A549 (cell line): ENCODE measurements at regions of chr5 and their contacts with region 1.

Region 1: GRCh38 chr5:151651997-151652645 is 34.6 kb downstream of the SPARC start:
- DNase-seq: peak; percentile 80 to 94
- ATAC-seq: peak; percentile 99 to 100
- H3K4me3 ChIP-seq: no peak overlapping the region
- H3K27ac ChIP-seq: peak overlapping the region in 1 of 2 experiments; percentile 9; a peak in 1 of 6 replicates
- H3K4me1 ChIP-seq: no peaks in the 10 kb centered on the region
- CTCF ChIP-seq: peak; percentile 86
- EP300 ChIP-seq: no peak
- POLR2A ChIP-seq: no peak
- RAD21 ChIP-seq: peak; percentile 91 to 94

Region 2: DNA sequence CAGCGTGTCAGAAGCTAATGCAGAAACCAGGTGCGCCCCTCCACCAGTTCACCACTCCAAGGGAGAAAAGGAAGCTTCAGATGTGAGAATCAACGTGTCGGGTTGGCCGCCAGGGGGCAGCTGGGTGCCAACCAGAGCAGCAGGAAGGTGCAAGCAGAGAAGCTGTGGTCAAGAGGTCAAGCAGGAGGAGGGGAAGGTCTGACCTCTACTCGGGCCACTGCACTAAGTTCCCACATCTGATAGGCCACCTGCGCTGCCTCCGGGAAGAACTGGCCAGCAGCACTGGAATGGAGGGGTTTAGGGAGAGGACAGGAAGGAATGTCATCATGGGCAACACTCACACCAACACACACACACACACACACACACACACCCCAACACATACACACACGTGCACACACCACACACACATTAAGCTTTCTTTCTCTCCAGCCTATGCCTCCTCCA is 525.9 kb before region 1 on chr5:
- CTCF ChIA-PET with region 1: interaction called, 12 read pairs
- POLR2A ChIA-PET with region 1: no interaction called
- DNase-seq: peak; percentile 72 to 74
- ATAC-seq: peak; percentile 84 to 93; a peak in 5 of 6 replicates
- H3K4me3 ChIP-seq: no peak overlapping the region
- H3K27ac ChIP-seq: no peak overlapping the region
- H3K4me1 ChIP-seq: peaks cover 7% of the 10 kb centered on the region; the same call in 2 of the 3 replicates
- CTCF ChIP-seq: peak; percentile 85
- EP300 ChIP-seq: no peak
- POLR2A ChIP-seq: no peak
- RAD21 ChIP-seq: peak; percentile 74 to 78

Region 3: GRCh38 chr5:151447174-151448037 is 204.7 kb before region 1 on chr5 and contains the start of gene SLC36A1:
- CTCF ChIA-PET with region 1: interaction called, 83 read pairs
- POLR2A ChIA-PET with region 1: interaction called, 9 read pairs
- DNase-seq: peak; percentile 89 to 90
- ATAC-seq: peak; percentile 85 to 95
- H3K4me3 ChIP-seq: peak within 1 kb of the TSS; percentile 75
- H3K27ac ChIP-seq: peak within 1 kb of the TSS; percentile 72 to 89
- H3K4me1 ChIP-seq: peaks cover 16% of the 10 kb centered on the region
- CTCF ChIP-seq: peak; percentile 92
- EP300 ChIP-seq: no peak
- POLR2A ChIP-seq: peak; percentile 49; the same call in 1 of the 2 replicates
- RAD21 ChIP-seq: peak; percentile 74 to 86
- polyA plus RNA-seq, gene SLC36A1: 10.8 and 12.4 TPM in 2 replicates

Region 4: GRCh38 chr5:151499501-151500035 is 152.6 kb before region 1 on chr5:
- CTCF ChIA-PET with region 1: interaction called, 11 read pairs
- POLR2A ChIA-PET with region 1: no interaction called
- DNase-seq: no peak
- ATAC-seq: no peak
- H3K4me3 ChIP-seq: no peak overlapping the region
- H3K27ac ChIP-seq: no peak overlapping the region
- H3K4me1 ChIP-seq: no peaks in the 10 kb centered on the region
- CTCF ChIP-seq: no peak
- EP300 ChIP-seq: no peak
- POLR2A ChIP-seq: no peak
- RAD21 ChIP-seq: no peak

Region 5: DNA sequence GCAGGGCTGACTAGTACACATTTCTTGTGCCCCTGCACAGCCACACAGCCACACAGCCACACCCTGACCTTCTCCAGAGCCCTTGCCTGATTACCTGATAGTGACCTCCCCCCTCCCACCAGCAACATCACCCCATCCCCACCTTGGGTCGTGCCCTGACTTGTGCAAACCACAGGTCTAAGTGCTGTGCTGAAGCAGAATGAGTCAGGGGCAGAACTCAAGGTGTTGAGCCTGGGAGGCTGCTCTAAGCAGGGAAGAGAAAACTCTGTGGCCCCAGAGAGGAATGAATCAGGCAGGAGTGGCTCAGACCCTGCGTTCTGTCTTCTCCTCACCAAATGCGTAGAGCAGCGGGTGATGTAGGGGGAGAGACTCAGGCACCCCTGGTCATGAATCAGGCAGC is 36.7 kb before region 1 on chr5:
- CTCF ChIA-PET with region 1: interaction called, 17 read pairs
- POLR2A ChIA-PET with region 1: no interaction called
- DNase-seq: no peak
- ATAC-seq: peak; percentile 5 to 13; a peak in 1 of 6 replicates
- H3K4me3 ChIP-seq: no peak overlapping the region
- H3K27ac ChIP-seq: peak overlapping the region in 1 of 2 experiments; percentile 44; a peak in 3 of 6 replicates
- H3K4me1 ChIP-seq: peaks cover 27% of the 10 kb centered on the region
- CTCF ChIP-seq: no peak
- EP300 ChIP-seq: no peak
- POLR2A ChIP-seq: no peak
- RAD21 ChIP-seq: no peak

Region 6: GRCh38 chr5:151675611-151676313 is 23.6 kb after region 1 on chr5:
- CTCF ChIA-PET with region 1: interaction called, 59 read pairs
- POLR2A ChIA-PET with region 1: no interaction called
- DNase-seq: no peak
- ATAC-seq: no peak
- H3K4me3 ChIP-seq: no peak overlapping the region
- H3K27ac ChIP-seq: peak overlapping the region in 1 of 2 experiments; percentile 11; a peak in 2 of 6 replicates
- H3K4me1 ChIP-seq: peaks cover 20% of the 10 kb centered on the region
- CTCF ChIP-seq: no peak
- EP300 ChIP-seq: no peak
- POLR2A ChIP-seq: no peak
- RAD21 ChIP-seq: no peak